ENCODE measurements at regions of chr9 and their contacts with region 1.

Region 1: GRCh38 chr9:104747558-104748358 is at the start of gene NIPSNAP3A:
- DNase-seq: peak; percentile 75 to 99 (median 85)
- ATAC-seq: peak; percentile 88 to 91
- H3K4me3 Mint-ChIP-seq: peak within 1 kb of the TSS; percentile 85 to 100 (median 96)
- H3K27ac Mint-ChIP-seq: peak within 1 kb of the TSS; percentile 96 to 100 (median 98)
- H3K4me1 Mint-ChIP-seq: peaks cover 10 to 28% (median 22%) of the 10 kb centered on the region in 4 donors
- H3K27me3 Mint-ChIP-seq: no peaks in the 10 kb centered on the region
- polyA plus RNA-seq, gene NIPSNAP3A: 15.6 to 17.8 (median 15.7) TPM

Region 2: DNA sequence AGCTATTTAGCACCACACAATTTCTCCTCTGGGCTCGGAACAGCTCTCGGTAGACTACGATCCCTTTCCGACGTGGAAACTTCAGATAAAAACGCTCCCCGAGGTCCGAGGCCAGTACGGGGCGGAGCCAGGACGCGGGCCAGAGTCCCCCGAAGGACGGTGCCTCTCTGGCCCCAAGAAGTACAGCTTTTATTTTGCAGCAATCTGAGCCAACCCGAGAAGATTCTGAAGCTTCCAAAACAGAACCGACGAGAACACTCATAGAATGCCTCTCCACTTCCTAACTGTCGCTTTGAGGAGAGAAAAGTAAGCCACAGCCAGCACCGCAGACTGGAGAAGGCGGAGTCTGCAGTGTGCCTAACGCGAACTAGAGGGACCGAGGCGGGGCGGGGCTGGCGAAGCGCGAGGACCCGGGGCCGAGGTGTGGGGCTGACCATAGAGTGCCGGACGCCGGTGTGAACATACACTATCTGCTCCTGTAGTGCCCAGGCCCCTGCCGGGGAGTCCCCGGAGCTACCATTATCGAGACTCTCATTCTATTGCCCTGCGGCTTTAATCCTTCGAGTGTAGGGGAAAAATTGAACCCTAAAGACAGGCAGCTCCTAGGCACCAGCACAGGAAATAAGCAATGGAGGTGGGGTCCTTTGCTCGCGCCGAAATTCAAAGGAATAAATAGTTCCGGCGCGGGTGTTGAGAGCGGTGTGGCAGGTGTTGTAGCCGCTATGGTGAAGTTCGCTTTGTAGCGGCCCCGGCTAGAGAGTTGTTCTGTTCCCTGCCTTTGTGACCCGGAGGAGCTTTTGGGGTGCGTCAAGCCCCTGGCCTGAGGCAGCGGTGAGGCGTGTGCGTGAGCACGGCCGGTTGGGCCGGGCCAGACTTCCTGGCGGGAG is 653.9 kb before region 1 on chr9 and contains the start of gene SMC2:
- POLR2A ChIA-PET with region 1: interaction called, 16 read pairs
- DNase-seq: peak; percentile 84 to 98 (median 94)
- ATAC-seq: peak; percentile 94
- H3K4me3 Mint-ChIP-seq: peak within 1 kb of the TSS; percentile 97 to 100 (median 99)
- H3K27ac Mint-ChIP-seq: peak within 1 kb of the TSS; percentile 97 to 100 (median 99)
- H3K4me1 Mint-ChIP-seq: peaks cover 13 to 51% (median 44%) of the 10 kb centered on the region in 4 donors
- H3K27me3 Mint-ChIP-seq: no peaks in the 10 kb centered on the region
- polyA plus RNA-seq, gene SMC2: 11.8 to 14.3 (median 12.7) TPM

Region 3: GRCh38 chr9:104658496-104659195 is 89.1 kb before region 1 on chr9:
- POLR2A ChIA-PET with region 1: no interaction called
- DNase-seq: no peak
- ATAC-seq: no peak
- H3K4me3 Mint-ChIP-seq: no peak overlapping the region
- H3K27ac Mint-ChIP-seq: no peak overlapping the region
- H3K4me1 Mint-ChIP-seq: no peaks in the 10 kb centered on the region
- H3K27me3 Mint-ChIP-seq: peaks cover 0 to 6% (median 1%) of the 10 kb centered on the region in 5 donors

Region 4: GRCh38 chr9:104765138-104765537 is 17.4 kb after region 1 on chr9:
- POLR2A ChIA-PET with region 1: interaction called, 15 read pairs
- DNase-seq: no peak
- ATAC-seq: no peak
- H3K4me3 Mint-ChIP-seq: peak overlapping the region in 9 of 10 donors; percentile 85 to 97 (median 92)
- H3K27ac Mint-ChIP-seq: no peak overlapping the region
- H3K4me1 Mint-ChIP-seq: peaks cover 4 to 17% (median 8%) of the 10 kb centered on the region in 4 donors
- H3K27me3 Mint-ChIP-seq: no peaks in the 10 kb centered on the region

Region 5: DNA sequence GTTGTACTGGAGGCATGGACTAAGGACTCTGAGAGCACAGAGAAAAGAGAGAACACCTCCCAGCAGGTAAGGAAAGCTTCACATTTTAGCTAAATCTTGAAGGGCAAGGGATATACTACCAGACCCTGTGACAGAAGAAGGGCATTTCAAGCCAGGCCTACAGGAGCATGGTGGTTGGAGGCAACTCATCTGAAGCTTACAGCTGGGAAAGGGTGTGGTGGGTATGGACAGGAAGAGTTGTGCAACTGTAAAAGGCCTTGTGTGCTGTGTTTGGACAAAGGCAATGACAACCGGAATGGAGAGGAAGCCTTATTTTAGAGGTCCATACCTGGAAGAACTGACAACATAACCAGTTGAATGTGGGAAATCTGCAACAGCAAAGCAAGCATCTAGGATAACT is 47.3 kb after region 1 on chr9:
- POLR2A ChIA-PET with region 1: no interaction called
- DNase-seq: no peak
- ATAC-seq: no peak
- H3K4me3 Mint-ChIP-seq: no peak overlapping the region
- H3K27ac Mint-ChIP-seq: no peak overlapping the region
- H3K4me1 Mint-ChIP-seq: no peaks in the 10 kb centered on the region
- H3K27me3 Mint-ChIP-seq: no peaks in the 10 kb centered on the region

Measured in naive thymus-derived CD8-positive, alpha-beta T cell (primary cell).